ENCODE measurements at regions of chr15 and their contacts with region 1.

Region 1: DNA sequence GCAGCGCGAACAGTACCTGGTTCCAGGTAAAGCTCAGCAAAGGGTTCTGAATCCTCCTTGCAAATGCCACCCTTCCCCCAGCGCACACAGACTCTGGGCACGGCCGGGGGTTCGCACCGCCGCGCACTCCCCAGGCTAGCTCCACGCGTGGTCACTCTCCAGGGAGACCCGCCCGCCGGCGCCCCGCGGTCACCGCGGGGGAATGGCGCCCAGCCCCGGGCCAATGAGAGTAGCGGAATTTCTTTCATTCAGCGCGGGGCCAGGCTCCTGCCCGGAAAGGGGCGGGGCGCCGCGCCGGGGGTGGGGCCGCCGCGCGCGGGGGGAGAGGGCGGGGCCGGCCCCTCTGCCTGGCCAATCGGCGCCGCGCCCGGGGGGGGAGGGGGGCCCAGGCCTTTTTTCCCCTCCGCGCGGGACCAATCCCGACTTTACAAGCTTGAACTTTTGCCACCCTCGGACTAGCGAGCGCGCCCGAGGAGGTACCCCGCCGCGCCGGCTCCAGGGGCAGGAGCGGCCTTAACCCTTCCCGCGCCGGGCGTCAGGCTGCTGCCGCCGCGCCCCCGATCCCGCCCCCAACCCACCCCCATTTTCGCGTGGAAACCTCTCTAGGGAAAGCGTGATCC is 1.1 kb upstream of the SMAD6 start:
- DNase-seq: no peak
- H3K4me3 ChIP-seq: peak overlapping the region; percentile 82
- H3K27me3 ChIP-seq: no peaks in the 10 kb centered on the region
- CTCF ChIP-seq: no peak

Region 2: DNA sequence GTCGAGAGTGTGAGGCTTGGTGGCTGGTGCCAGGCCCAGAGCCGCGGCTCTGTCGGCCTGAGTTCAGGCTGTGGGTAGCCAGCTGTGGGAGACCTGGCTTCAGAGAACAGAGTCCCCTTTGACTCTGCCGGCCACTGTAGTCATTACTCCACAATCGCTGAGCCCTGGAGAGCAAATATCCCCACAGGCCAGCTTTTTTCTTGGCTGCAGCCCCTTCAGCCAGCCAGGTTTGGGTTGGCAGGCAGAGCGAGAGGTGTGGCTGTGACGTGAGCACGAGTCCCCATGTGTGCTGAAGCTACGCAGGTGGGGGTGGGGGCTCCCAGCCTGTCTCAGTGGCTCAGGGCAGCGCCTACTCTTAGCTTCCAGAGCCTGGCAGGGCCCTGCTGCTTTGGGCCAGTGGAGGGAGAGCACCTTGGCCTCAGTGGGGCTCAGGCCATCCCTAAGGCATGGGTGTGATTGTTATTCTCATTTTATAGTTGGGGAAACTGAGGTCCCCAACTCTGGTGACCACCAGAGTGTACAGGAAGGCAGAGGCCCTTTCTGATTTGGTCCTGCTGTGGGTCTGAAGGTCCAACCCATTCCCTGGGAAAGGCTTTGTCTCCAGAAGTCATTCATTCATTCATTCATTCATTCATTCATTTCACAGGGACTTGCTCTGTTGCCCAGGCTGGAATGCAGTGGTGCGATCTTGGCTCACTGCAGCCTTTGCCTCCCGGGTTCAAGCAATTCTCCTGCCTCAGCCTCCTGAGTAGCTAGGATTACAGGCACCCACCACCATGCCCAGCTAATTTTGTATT is 89.5 kb before region 1 on chr15:
- CTCF ChIA-PET with region 1: interaction called, 10 read pairs
- POLR2A ChIA-PET with region 1: no interaction called
- DNase-seq: no peak
- H3K4me3 ChIP-seq: no peak overlapping the region
- H3K27me3 ChIP-seq: no peaks in the 10 kb centered on the region
- CTCF ChIP-seq: no peak

Region 3: GRCh38 chr15:66619151-66619903 is 81.6 kb before region 1 on chr15:
- CTCF ChIA-PET with region 1: interaction called, 35 read pairs
- POLR2A ChIA-PET with region 1: interaction called, 8 read pairs
- DNase-seq: no peak
- H3K4me3 ChIP-seq: no peak overlapping the region
- H3K27me3 ChIP-seq: no peaks in the 10 kb centered on the region
- CTCF ChIP-seq: peak; percentile 94

Region 4: GRCh38 chr15:66685638-66686150 is 15.2 kb before region 1 on chr15:
- CTCF ChIA-PET with region 1: interaction called, 19 read pairs
- POLR2A ChIA-PET with region 1: no interaction called
- DNase-seq: no peak
- H3K4me3 ChIP-seq: no peak overlapping the region
- H3K27me3 ChIP-seq: no peaks in the 10 kb centered on the region
- CTCF ChIP-seq: peak; percentile 36

Region 5: DNA sequence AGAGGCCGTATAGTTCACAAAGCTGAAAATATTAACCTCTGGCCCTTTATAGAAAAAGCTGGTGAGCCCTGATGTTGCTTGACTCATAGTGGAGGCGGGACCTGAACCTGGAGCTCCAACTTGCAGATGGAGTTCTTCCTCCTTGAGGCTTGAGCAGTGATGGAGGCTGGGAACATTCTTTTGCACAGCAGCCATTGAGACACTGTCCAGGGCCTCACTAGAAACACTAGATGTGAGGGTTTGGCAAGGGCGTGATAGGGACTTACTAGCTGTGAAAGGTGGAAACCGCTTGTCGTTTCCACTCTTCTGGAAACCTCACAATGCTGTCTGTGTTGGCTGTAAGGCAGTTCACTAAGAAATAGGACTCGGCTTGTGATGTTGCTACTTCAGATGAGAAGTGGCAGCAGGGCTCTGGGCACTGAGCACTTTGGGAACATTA is 13.7 kb after region 1 on chr15:
- CTCF ChIA-PET with region 1: interaction called, 13 read pairs
- POLR2A ChIA-PET with region 1: no interaction called
- DNase-seq: no peak
- H3K4me3 ChIP-seq: no peak overlapping the region
- H3K27me3 ChIP-seq: no peaks in the 10 kb centered on the region
- CTCF ChIP-seq: no peak

Region 6: DNA sequence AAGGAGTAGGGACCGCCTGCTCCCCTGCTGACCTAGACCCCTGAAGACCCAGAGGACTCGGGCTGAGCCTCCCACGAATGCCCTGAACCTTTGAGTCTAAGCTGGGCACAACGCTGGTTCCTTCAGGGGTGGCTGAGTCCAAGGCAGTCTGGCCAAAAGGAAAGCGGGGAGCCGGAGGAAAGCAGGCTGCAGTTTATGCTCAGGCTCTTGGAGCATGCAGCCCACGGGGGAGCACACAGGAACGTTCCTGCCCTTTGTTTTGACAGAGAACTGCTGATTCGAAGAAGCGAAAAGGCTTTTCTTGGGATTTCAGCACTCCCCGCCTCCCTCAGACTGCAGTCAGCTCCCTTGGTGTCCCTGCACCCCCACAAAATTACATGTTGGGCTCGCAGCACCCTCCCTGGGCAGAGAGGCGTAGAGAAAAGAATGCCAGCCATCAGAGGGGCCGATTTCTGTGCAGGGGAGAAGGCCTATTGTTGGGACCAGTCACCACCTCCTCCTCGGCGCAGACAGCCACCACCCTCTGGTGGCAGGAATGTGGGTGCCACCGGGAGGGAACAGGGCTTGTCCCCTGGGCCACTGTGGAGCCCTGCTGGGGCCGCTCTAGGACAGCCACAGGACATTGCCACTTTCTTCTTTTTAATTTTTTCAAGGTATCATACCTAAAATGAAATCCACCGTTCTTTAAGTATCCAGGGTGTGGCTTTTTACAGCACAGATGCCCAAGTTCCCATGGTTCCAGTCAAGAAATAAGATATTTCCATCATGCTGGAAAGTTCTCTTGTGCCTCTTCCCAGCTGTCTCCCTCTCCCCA is 73.3 kb after region 1 on chr15:
- CTCF ChIA-PET with region 1: interaction called, 155 read pairs
- POLR2A ChIA-PET with region 1: interaction called, 4 read pairs
- DNase-seq: no peak
- H3K4me3 ChIP-seq: no peak overlapping the region
- H3K27me3 ChIP-seq: no peaks in the 10 kb centered on the region
- CTCF ChIP-seq: peak; percentile 95

Region 7: DNA sequence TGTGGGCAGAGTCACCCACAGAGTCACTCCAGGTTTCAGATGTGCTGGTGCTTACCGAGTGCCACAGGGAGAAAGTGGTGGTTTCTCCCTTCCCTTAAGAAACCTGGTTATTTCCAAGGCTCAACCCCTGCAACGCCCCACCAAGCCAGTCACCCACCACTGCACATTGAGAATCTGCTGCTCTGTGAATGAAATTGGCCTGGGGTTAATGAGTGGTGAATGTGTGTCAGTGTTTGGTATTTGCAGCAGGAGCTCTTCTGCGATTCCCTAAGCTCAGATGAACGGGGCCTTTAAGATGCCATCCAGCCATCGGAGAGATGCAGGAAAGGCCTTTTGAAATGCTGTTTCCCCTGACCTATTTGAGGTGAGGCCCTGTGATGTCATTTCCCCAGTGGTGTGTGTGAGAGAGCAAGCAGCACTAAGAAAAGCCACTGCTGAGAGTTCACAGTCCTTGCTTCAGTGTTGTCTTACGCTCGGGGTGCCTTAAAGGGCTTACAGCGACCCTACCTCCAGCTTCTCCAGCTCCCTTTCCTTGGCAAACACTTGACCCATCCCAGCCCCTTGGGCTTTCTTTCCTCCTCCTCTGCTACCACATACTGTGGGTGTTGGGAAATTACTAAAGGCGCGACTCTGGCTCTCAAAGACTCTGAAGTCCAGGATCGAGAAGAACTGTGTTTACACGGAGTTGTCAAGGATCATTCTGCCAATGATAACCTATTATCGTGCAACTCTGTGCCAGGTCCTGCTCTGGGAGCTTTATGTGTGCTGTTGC is 433.3 kb after region 1 on chr15:
- CTCF ChIA-PET with region 1: no interaction called
- POLR2A ChIA-PET with region 1: no interaction called
- DNase-seq: no peak
- H3K4me3 ChIP-seq: no peak overlapping the region
- H3K27me3 ChIP-seq: no peaks in the 10 kb centered on the region
- CTCF ChIP-seq: no peak